Right cardiac atrium (tissue), 5 donors: ENCODE measurements at regions of chr3 and their contacts with region 1.

Region 1: DNA sequence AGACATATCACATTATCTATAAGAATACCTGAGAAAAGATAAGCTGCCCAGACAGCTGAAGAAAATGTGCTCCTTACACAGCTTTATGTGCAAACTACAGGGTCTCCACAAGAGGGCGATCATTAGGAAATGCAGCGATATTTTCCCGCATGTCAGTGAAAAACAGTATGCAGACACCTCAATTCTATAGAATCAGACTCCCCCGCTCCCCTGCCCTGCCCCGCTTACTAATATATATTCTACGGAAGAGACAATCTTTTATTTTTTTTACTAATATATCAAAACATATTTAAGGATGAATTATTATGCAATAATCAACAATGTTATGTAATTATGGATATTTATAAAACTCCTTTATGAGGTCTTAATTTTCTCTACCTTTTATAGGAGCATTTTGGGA is 681.3 kb downstream of the ROBO1 start:
- DNase-seq: no peak
- ATAC-seq: no peak
- H3K4me3 ChIP-seq: no peak overlapping the region
- H3K27ac ChIP-seq: no peak overlapping the region
- H3K4me1 ChIP-seq: no peaks in the 10 kb centered on the region
- H3K27me3 ChIP-seq: no peaks in the 10 kb centered on the region

Region 2: DNA sequence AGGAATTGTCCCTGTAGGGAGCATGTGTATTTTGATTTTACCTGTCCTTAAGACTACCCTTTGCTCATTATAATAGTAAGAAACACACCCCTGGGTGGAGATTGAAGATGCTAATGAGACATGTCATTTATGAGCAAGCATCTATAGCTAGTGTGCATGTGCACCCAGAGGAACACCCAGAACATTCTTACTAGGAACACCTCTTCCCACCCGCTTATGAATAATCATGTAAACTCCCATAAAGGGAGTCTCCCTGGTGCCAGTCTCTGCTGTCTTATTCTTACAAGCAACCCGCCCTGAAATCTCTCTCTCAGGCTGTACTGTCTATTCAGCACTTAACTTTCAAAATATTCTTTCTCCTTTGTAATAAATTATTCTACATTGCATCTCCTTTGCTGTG is 546.0 kb before region 1 on chr3:
- intact Hi-C with region 1: no loop called
- DNase-seq: no peak
- ATAC-seq: no peak
- H3K4me3 ChIP-seq: no peak overlapping the region
- H3K27ac ChIP-seq: no peak overlapping the region
- H3K4me1 ChIP-seq: no peaks in the 10 kb centered on the region
- H3K27me3 ChIP-seq: no peaks in the 10 kb centered on the region

Region 3: GRCh38 chr3:78926523-78926922 is 160.0 kb before region 1 on chr3:
- intact Hi-C with region 1: no loop called
- DNase-seq: no peak
- ATAC-seq: no peak
- H3K4me3 ChIP-seq: no peak overlapping the region
- H3K27ac ChIP-seq: no peak overlapping the region
- H3K4me1 ChIP-seq: no peaks in the 10 kb centered on the region
- H3K27me3 ChIP-seq: no peaks in the 10 kb centered on the region

Region 4: GRCh38 chr3:79497447-79498111 is 411.1 kb after region 1 on chr3:
- intact Hi-C with region 1: loop called in 1 of 4 experiments (anchors 10 kb)
- DNase-seq: no peak
- ATAC-seq: no peak
- H3K4me3 ChIP-seq: no peak overlapping the region
- H3K27ac ChIP-seq: no peak overlapping the region
- H3K4me1 ChIP-seq: no peaks in the 10 kb centered on the region
- H3K27me3 ChIP-seq: no peaks in the 10 kb centered on the region